CD4-positive, alpha-beta T cell (primary cell): ENCODE measurements at regions of chr12 and their contacts with region 1.

Region 1: DNA sequence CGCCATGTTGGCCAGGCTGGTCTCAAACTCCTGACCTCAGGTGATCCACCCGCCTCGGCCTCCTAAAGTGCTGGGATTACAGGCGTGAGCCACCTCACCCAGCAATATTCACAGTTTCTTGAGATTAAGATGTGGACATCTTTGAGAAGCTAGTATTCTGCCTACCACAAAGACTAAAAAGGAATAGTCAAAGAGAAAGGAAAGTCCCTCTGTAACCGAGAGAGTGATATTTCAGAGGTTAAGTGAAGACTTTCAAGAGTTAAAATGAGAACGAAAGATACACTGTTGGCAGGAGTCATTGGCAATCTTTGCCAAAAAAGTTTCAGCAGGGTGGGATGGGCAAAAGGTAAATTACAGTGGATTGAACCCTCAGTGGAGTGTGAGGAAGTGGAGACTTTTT is 15.6 kb downstream of the DGKA start:
- DNase-seq: no peak
- ATAC-seq: no peak
- H3K4me3 ChIP-seq: no peak overlapping the region
- H3K4me3 Mint-ChIP-seq: no peak overlapping the region
- H3K27ac ChIP-seq: no peak overlapping the region
- H3K27ac Mint-ChIP-seq: peak overlapping the region; percentile 72
- H3K4me1 ChIP-seq: peaks cover 19% of the 10 kb centered on the region
- H3K4me1 Mint-ChIP-seq: peaks cover 40% of the 10 kb centered on the region
- H3K27me3 ChIP-seq: no peaks in the 10 kb centered on the region
- H3K27me3 Mint-ChIP-seq: no peaks in the 10 kb centered on the region
- CTCF ChIP-seq: no peak

Region 2: GRCh38 chr12:55966408-55967281 is 20.1 kb after region 1 on chr12 and contains the start of gene CDK2:
- CTCF ChIA-PET with region 1: no interaction called
- POLR2A ChIA-PET with region 1: no interaction called
- intact Hi-C with region 1: loop called in 1 of 2 experiments (anchors 2 kb)
- DNase-seq: peak; percentile 56 to 95 (median 83)
- ATAC-seq: peak; percentile 98
- H3K4me3 ChIP-seq: peak within 1 kb of the TSS; percentile 89
- H3K4me3 Mint-ChIP-seq: peak within 1 kb of the TSS; percentile 91
- H3K27ac ChIP-seq: no peak within 1 kb of the TSS
- H3K27ac Mint-ChIP-seq: peak within 1 kb of the TSS; percentile 79
- H3K4me1 ChIP-seq: peaks cover 23% of the 10 kb centered on the region
- H3K4me1 Mint-ChIP-seq: peaks cover 33% of the 10 kb centered on the region
- H3K27me3 ChIP-seq: no peaks in the 10 kb centered on the region
- H3K27me3 Mint-ChIP-seq: no peaks in the 10 kb centered on the region
- CTCF ChIP-seq: no peak
- total RNA-seq, gene CDK2: 15.8 to 16.0 TPM

Region 3: GRCh38 chr12:55985341-55985740 is 38.8 kb after region 1 on chr12:
- CTCF ChIA-PET with region 1: no interaction called
- POLR2A ChIA-PET with region 1: no interaction called
- intact Hi-C with region 1: no loop called
- DNase-seq: no peak
- ATAC-seq: no peak
- H3K4me3 ChIP-seq: no peak overlapping the region
- H3K4me3 Mint-ChIP-seq: no peak overlapping the region
- H3K27ac ChIP-seq: no peak overlapping the region
- H3K27ac Mint-ChIP-seq: no peak overlapping the region
- H3K4me1 ChIP-seq: no peaks in the 10 kb centered on the region
- H3K4me1 Mint-ChIP-seq: peaks cover 11% of the 10 kb centered on the region
- H3K27me3 ChIP-seq: no peaks in the 10 kb centered on the region
- H3K27me3 Mint-ChIP-seq: no peaks in the 10 kb centered on the region
- CTCF ChIP-seq: no peak